ENCODE measurements at regions of chr1 and their contacts with region 1.

Region 1: GRCh38 chr1:172357753-172358385 is 62.6 kb upstream of the C1orf105 start:
- DNase-seq: no peak
- ATAC-seq: no peak
- H3K4me3 ChIP-seq: peak overlapping the region; percentile 51; the same call in 1 of the 2 replicates
- H3K27ac ChIP-seq: peak overlapping the region; percentile 84
- H3K4me1 ChIP-seq: peaks cover 69% of the 10 kb centered on the region
- H3K27me3 ChIP-seq: no peaks in the 10 kb centered on the region
- CTCF ChIP-seq: no peak

Region 2: GRCh38 chr1:172041742-172042141 is 316.1 kb before region 1 on chr1:
- CTCF ChIA-PET with region 1: no interaction called
- POLR2A ChIA-PET with region 1: no interaction called
- intact Hi-C with region 1: loop called (anchors 1 kb)
- DNase-seq: peak; percentile 72
- ATAC-seq: peak; percentile 48
- H3K4me3 ChIP-seq: no peak overlapping the region
- H3K27ac ChIP-seq: no peak overlapping the region
- H3K4me1 ChIP-seq: peaks cover 19% of the 10 kb centered on the region
- H3K27me3 ChIP-seq: no peaks in the 10 kb centered on the region
- CTCF ChIP-seq: peak; percentile 80

Region 3: DNA sequence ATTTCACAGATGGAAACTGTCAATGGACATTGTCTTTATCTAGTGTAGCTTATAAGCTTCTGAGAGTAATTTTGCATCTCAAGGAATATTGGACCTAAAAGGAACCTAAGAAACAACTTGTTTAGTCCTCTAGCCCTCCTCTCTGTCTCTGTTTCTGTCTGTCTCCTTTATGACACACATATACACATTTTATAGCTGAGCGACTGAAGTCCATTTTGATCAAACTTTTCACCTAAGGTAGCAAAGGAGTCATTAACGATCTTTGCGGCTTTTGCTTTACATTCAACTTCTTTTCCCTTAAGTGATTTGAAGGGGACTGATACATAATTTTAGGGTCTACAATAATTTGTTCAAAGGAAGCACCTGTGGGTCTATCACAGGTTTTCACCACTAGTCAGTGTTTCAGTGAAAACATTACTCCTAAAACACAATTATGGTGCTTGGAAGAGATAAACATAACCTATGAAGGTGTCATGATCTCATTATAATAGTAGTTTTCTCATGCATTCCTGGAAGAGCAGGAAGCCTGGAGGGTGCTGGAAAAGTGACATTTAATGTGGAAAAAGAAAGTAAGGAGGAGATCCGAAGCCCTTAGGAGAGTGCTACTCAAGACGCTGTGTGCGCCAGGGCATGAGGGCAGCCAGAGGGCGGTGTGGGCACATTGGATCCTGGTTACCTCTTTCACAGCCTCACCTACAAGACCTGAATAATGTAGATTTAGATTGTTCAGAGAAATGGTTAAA is 267.9 kb before region 1 on chr1:
- CTCF ChIA-PET with region 1: no interaction called
- POLR2A ChIA-PET with region 1: no interaction called
- intact Hi-C with region 1: loop called (anchors 1 kb)
- DNase-seq: peak; percentile 94
- ATAC-seq: peak; percentile 100
- H3K4me3 ChIP-seq: peak overlapping the region; percentile 10; the same call in 1 of the 2 replicates
- H3K27ac ChIP-seq: no peak overlapping the region
- H3K4me1 ChIP-seq: no peaks in the 10 kb centered on the region
- H3K27me3 ChIP-seq: no peaks in the 10 kb centered on the region
- CTCF ChIP-seq: peak; percentile 100

Region 4: DNA sequence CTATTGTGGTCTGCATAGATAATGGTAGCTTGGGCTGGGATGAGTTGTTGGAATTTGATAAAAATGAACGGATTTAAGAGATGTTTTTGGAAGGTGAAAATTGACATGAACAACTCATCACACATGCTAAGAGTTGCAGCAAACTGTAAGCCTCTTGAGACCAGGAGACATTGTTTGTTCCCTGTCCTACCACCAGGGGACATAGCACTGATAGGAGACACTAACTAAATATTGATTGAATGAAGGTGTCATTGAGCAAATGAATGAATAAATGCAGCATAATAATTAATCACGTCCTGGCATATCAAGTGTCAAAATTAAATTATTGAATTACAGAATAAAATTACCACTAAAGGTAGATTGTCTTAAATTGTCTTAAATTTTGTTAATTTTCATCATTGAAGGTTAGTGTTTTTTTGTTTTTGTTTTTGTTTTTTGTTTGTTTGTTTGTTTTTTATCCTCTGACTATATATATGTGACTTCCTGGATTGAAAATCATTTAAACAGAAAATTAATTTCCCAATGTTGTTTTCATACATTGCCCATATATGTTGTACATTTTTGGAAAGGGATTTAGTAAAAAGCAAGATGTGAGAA is 222.7 kb before region 1 on chr1:
- CTCF ChIA-PET with region 1: no interaction called
- POLR2A ChIA-PET with region 1: no interaction called
- intact Hi-C with region 1: loop called (anchors 5 kb)
- DNase-seq: peak; percentile 76
- ATAC-seq: 0 out of 2 replicates have a peak, but pooled peaks have one; percentile 29
- H3K4me3 ChIP-seq: no peak overlapping the region
- H3K27ac ChIP-seq: no peak overlapping the region
- H3K4me1 ChIP-seq: peaks cover 12% of the 10 kb centered on the region; the same call in 1 of the 2 replicates
- H3K27me3 ChIP-seq: no peaks in the 10 kb centered on the region
- CTCF ChIP-seq: peak; percentile 99

Region 5: DNA sequence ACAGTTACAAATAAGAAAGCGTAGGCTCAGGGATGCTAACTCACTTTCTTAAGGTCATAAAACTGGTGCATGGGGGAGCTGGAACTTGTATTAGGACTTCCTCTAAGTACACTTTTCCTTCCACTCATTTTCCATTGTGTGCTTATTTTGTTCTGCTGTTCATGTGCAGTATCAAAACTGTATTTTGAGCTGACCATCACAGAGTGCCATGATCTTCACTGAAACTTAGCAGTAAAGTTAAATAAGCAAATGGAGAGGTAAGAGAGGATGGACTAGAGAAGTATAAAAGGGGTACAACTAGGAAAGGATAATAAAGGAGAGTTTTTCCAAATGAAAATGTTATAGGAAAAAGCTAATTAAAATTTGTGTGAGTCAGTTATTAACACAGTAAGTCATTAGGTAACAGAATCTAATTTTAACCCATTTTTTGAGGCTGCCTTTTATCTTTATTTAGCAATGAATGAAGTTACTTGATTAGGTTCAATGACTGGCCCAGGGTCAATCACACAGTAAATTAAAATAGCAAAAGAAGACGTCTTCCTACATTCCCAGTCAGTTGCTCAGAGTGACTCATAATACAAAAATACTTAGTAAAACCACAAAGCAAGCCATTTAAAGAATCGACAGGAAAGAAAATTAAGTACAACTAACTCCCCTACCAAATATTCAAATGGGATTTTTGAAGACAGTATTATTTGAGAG is 103.2 kb before region 1 on chr1:
- CTCF ChIA-PET with region 1: no interaction called
- POLR2A ChIA-PET with region 1: interaction called, 3 read pairs
- intact Hi-C with region 1: loop called (anchors 1 kb)
- DNase-seq: peak; percentile 98
- ATAC-seq: peak; percentile 96
- H3K4me3 ChIP-seq: peak overlapping the region; percentile 0; the same call in 1 of the 2 replicates
- H3K27ac ChIP-seq: peak overlapping the region; percentile 53
- H3K4me1 ChIP-seq: peaks cover 23% of the 10 kb centered on the region
- H3K27me3 ChIP-seq: no peaks in the 10 kb centered on the region
- CTCF ChIP-seq: no peak

Region 6: GRCh38 chr1:172343240-172344160 is 14.4 kb before region 1 on chr1:
- CTCF ChIA-PET with region 1: no interaction called
- POLR2A ChIA-PET with region 1: no interaction called
- intact Hi-C with region 1: loop called (anchors 1 kb)
- DNase-seq: peak; percentile 85
- ATAC-seq: peak; percentile 93
- H3K4me3 ChIP-seq: peak overlapping the region; percentile 48
- H3K27ac ChIP-seq: peak overlapping the region; percentile 70
- H3K4me1 ChIP-seq: peaks cover 24% of the 10 kb centered on the region
- H3K27me3 ChIP-seq: no peaks in the 10 kb centered on the region
- CTCF ChIP-seq: no peak